ENCODE measurements at regions of chr11 and their contacts with region 1.

Region 1: GRCh38 chr11:20754933-20755332 is 85.5 kb downstream of the NELL1 start:
- DNase-seq: no peak
- H3K4me3 ChIP-seq: no peak overlapping the region
- H3K27ac ChIP-seq: no peak overlapping the region
- H3K4me1 ChIP-seq: no peaks in the 10 kb centered on the region
- H3K27me3 ChIP-seq: no peaks in the 10 kb centered on the region
- CTCF ChIP-seq: no peak
- POLR2A ChIP-seq: no peak

Region 2: GRCh38 chr11:20739107-20739506 is 15.8 kb before region 1 on chr11:
- intact Hi-C with region 1: loop called (anchors 1 kb)
- DNase-seq: no peak
- H3K4me3 ChIP-seq: no peak overlapping the region
- H3K27ac ChIP-seq: no peak overlapping the region
- H3K4me1 ChIP-seq: no peaks in the 10 kb centered on the region
- H3K27me3 ChIP-seq: no peaks in the 10 kb centered on the region
- CTCF ChIP-seq: no peak
- POLR2A ChIP-seq: no peak

Region 3: DNA sequence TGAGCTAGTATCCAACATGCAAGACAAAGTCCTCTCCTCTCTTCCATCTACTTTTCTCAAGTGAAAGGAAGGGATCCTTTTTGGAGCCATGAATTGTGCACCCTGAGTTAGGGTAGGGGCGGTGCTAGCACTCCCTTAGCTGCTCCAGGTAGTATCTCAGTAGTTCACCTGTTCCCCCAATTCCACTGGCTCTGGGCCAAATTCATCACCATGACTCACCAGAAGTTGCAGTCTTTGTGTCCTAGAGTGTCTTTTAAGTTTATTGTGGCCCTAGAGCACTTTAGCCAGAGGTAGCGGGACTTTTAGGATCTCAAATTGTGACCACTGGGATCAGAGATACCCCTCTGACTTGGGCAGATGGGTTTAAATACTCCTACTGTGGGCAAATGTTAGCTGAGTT is 1039.4 kb after region 1 on chr11:
- intact Hi-C with region 1: no loop called
- DNase-seq: no peak
- H3K4me3 ChIP-seq: no peak overlapping the region
- H3K27ac ChIP-seq: no peak overlapping the region
- H3K4me1 ChIP-seq: no peaks in the 10 kb centered on the region
- H3K27me3 ChIP-seq: no peaks in the 10 kb centered on the region
- CTCF ChIP-seq: no peak
- POLR2A ChIP-seq: no peak